ENCODE measurements at regions of chr9 and their contacts with region 1.

Region 1: DNA sequence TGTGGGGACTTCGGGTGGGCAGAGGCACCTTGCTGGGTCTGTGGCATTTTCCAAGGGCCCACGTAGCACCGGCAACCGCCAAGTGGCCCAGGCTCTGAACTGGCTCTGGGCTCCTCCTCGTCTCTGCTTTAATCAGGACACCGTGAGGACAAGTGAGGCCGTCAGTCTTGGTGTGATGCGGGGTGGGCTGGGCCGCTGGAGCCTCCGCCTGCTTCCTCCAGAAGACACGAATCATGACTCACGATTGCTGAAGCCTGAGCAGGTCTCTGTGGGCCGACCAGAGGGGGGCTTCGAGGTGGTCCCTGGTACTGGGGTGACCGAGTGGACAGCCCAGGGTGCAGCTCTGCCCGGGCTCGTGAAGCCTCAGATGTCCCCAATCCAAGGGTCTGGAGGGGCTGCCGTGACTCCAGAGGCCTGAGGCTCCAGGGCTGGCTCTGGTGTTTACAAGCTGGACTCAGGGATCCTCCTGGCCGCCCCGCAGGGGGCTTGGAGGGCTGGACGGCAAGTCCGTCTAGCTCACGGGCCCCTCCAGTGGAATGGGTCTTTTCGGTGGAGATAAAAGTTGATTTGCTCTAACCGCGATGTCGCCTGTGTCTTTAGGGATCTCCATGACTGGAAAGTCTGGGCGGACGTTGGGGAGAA is 5.8 kb downstream of the DPP7 start:
- DNase-seq: no peak
- ATAC-seq: no peak
- H3K4me3 ChIP-seq: no peak overlapping the region
- H3K4me3 Mint-ChIP-seq: no peak overlapping the region
- H3K27ac ChIP-seq: no peak overlapping the region
- H3K27ac Mint-ChIP-seq: no peak overlapping the region
- H3K4me1 ChIP-seq: peaks cover 11% of the 10 kb centered on the region
- H3K4me1 Mint-ChIP-seq: no peaks in the 10 kb centered on the region
- H3K27me3 ChIP-seq: no peaks in the 10 kb centered on the region
- H3K27me3 Mint-ChIP-seq: no peaks in the 10 kb centered on the region
- CTCF ChIP-seq: no peak

Region 2: GRCh38 chr9:137029058-137029936 is 79.4 kb before region 1 on chr9:
- intact Hi-C with region 1: no loop called
- DNase-seq: peak; percentile 79 to 83
- ATAC-seq: peak; percentile 43 to 67 (median 50)
- H3K4me3 ChIP-seq: peak overlapping the region; percentile 68
- H3K4me3 Mint-ChIP-seq: peak overlapping the region; percentile 91
- H3K27ac ChIP-seq: peak overlapping the region; percentile 73
- H3K27ac Mint-ChIP-seq: peak overlapping the region; percentile 88 to 91
- H3K4me1 ChIP-seq: peaks cover 92% of the 10 kb centered on the region
- H3K4me1 Mint-ChIP-seq: peaks cover 32 to 68% of the 10 kb centered on the region in 2 donors
- H3K27me3 ChIP-seq: no peaks in the 10 kb centered on the region
- H3K27me3 Mint-ChIP-seq: no peaks in the 10 kb centered on the region
- CTCF ChIP-seq: peak; percentile 80

Region 3: GRCh38 chr9:137150617-137151457 is 42.1 kb after region 1 on chr9:
- intact Hi-C with region 1: loop called (anchors 2 kb)
- DNase-seq: peak in 1 of 2 donors; percentile 66
- ATAC-seq: peak in 2 of 3 donors; percentile 21 to 40
- H3K4me3 ChIP-seq: no peak overlapping the region
- H3K4me3 Mint-ChIP-seq: no peak overlapping the region
- H3K27ac ChIP-seq: no peak overlapping the region
- H3K27ac Mint-ChIP-seq: peak overlapping the region in 1 of 2 donors; percentile 48
- H3K4me1 ChIP-seq: peaks cover 8% of the 10 kb centered on the region
- H3K4me1 Mint-ChIP-seq: no peaks in the 10 kb centered on the region
- H3K27me3 ChIP-seq: no peaks in the 10 kb centered on the region
- H3K27me3 Mint-ChIP-seq: peaks cover 0 to 8% of the 10 kb centered on the region in 2 donors
- CTCF ChIP-seq: no peak

Region 4: GRCh38 chr9:137556069-137556838 is 447.5 kb after region 1 on chr9:
- intact Hi-C with region 1: no loop called
- DNase-seq: no peak
- ATAC-seq: no peak
- H3K4me3 ChIP-seq: no peak overlapping the region
- H3K4me3 Mint-ChIP-seq: no peak overlapping the region
- H3K27ac ChIP-seq: no peak overlapping the region
- H3K27ac Mint-ChIP-seq: no peak overlapping the region
- H3K4me1 ChIP-seq: peaks cover 7% of the 10 kb centered on the region
- H3K4me1 Mint-ChIP-seq: peaks cover 6 to 12% of the 10 kb centered on the region in 2 donors
- H3K27me3 ChIP-seq: no peaks in the 10 kb centered on the region
- H3K27me3 Mint-ChIP-seq: no peaks in the 10 kb centered on the region
- CTCF ChIP-seq: no peak